MCF 10A (cell line): ENCODE measurements at regions of chr1 and their contacts with region 1.

Region 1: DNA sequence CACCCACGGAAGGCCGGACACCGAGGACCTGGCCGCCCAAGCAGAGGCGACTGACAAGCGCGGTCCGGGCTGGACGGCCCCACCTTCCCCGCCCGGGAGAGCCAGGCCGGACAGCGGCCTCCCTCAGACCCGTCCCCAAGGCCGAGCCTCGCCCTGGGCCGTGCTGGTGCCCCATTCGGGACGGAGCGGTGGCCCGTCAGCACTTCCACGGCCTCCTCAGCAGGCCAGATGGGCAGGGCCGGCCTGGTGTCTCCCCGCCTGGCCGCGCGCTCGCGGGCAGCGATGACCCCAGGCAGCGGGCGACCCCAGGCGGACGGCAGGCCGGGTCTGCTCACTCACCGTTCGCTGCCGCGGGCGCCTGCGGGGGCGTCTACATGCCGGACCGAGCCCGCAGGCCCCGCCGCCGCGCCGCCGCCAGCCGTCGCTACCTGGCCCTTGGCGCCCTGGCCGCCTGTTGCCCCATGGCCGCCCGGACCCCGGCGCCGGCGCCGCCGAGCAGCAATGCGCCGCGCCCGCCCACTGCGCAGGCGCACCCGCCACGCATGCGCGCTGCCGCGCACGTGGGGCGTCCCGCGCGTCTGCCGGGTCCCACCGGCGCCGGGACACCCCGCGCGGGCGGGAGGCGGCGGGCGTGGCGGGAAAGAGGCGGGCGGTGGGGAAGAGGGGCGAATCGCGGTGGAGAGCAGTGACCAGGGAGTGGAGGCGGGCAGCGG is at the start of gene NADK:
- DNase-seq: peak; percentile 59
- H3K4me3 Mint-ChIP-seq: peak within 1 kb of the TSS; percentile 82
- H3K27ac Mint-ChIP-seq: peak within 1 kb of the TSS; percentile 68
- H3K4me1 Mint-ChIP-seq: peaks cover 36% of the 10 kb centered on the region
- H3K27me3 Mint-ChIP-seq: no peaks in the 10 kb centered on the region
- CTCF ChIP-seq: no peak
- total RNA-seq, gene NADK: 106 and 107 TPM in 2 replicates

Region 2: GRCh38 chr1:1758692-1759455 is 19.2 kb before region 1 on chr1:
- CTCF ChIA-PET with region 1: interaction called, 4 read pairs
- POLR2A ChIA-PET with region 1: interaction called, 54 read pairs
- intact Hi-C with region 1: loop called (anchors 2 kb)
- DNase-seq: peak; percentile 80
- H3K4me3 Mint-ChIP-seq: peak overlapping the region; percentile 55
- H3K27ac Mint-ChIP-seq: peak overlapping the region; percentile 64
- H3K4me1 Mint-ChIP-seq: peaks cover 38% of the 10 kb centered on the region
- H3K27me3 Mint-ChIP-seq: no peaks in the 10 kb centered on the region
- CTCF ChIP-seq: no peak

Region 3: GRCh38 chr1:1763657-1764616 is 14.2 kb before region 1 on chr1:
- CTCF ChIA-PET with region 1: interaction called, 4 read pairs
- POLR2A ChIA-PET with region 1: interaction called, 54 read pairs
- intact Hi-C with region 1: loop called (anchors 2 kb)
- DNase-seq: peak; percentile 98
- H3K4me3 Mint-ChIP-seq: peak overlapping the region; percentile 42
- H3K27ac Mint-ChIP-seq: peak overlapping the region; percentile 87
- H3K4me1 Mint-ChIP-seq: peaks cover 31% of the 10 kb centered on the region
- H3K27me3 Mint-ChIP-seq: no peaks in the 10 kb centered on the region
- CTCF ChIP-seq: no peak

Region 4: GRCh38 chr1:1841575-1841995 is 63.5 kb after region 1 on chr1:
- CTCF ChIA-PET with region 1: no interaction called
- POLR2A ChIA-PET with region 1: no interaction called
- intact Hi-C with region 1: no loop called
- DNase-seq: no peak
- H3K4me3 Mint-ChIP-seq: no peak overlapping the region
- H3K27ac Mint-ChIP-seq: no peak overlapping the region
- H3K4me1 Mint-ChIP-seq: peaks cover 9% of the 10 kb centered on the region
- H3K27me3 Mint-ChIP-seq: no peaks in the 10 kb centered on the region
- CTCF ChIP-seq: no peak

Region 5: GRCh38 chr1:1890506-1891348 is 112.6 kb after region 1 on chr1 and contains the start of gene GNB1:
- CTCF ChIA-PET with region 1: no interaction called
- POLR2A ChIA-PET with region 1: interaction called, 10 read pairs
- intact Hi-C with region 1: loop called (anchors 5 kb)
- DNase-seq: peak; percentile 85
- H3K4me3 Mint-ChIP-seq: peak within 1 kb of the TSS; percentile 85
- H3K27ac Mint-ChIP-seq: peak within 1 kb of the TSS; percentile 91
- H3K4me1 Mint-ChIP-seq: peaks cover 25% of the 10 kb centered on the region
- H3K27me3 Mint-ChIP-seq: no peaks in the 10 kb centered on the region
- CTCF ChIP-seq: no peak
- total RNA-seq, gene GNB1: 426 and 430 TPM in 2 replicates